ENCODE measurements at regions of chr11 and their contacts with region 1.

Region 1: DNA sequence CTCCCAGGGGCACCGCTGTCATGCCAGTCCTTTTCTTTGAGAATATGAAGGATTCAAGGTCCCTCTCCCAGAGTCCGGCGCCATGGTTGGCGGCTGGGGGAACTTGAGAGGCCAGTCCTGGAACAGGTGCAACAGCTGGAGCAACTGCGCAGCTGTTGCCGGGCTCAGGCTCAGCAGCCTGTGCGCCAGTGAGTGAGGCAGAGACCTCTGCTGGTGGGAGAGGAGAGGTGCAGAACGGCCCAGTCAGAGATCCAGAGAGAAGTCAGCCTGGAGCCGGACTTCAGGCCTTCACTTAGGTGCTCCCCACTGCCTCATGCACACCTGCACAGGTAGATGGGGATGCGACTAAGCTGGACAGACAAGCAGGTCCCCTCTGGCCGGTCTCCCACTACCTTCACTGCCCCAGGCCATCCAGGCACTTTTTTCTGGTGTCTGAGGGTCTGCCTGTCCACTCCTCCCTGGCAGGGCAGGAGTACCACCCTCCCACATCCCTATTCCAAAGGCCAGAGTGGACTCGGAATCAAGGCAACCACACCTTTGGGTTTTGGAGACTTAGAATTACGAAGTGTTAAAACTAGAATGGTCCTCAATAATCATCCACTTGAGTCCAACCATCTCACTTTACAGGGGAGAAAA is 4.6 kb downstream of the CHRDL2 start:
- DNase-seq: peak; percentile 79
- ATAC-seq: peak; percentile 90
- H3K4me3 Mint-ChIP-seq: no peak overlapping the region
- H3K27ac Mint-ChIP-seq: no peak overlapping the region
- H3K4me1 Mint-ChIP-seq: peaks cover 6% of the 10 kb centered on the region; the same call in 1 of the 2 replicates
- H3K27me3 Mint-ChIP-seq: peaks cover 78% of the 10 kb centered on the region
- CTCF ChIP-seq: peak; percentile 72

Region 2: GRCh38 chr11:74672956-74673692 is 53.5 kb before region 1 on chr11:
- CTCF ChIA-PET with region 1: no interaction called
- POLR2A ChIA-PET with region 1: no interaction called
- DNase-seq: no peak
- ATAC-seq: no peak
- H3K4me3 Mint-ChIP-seq: no peak overlapping the region
- H3K27ac Mint-ChIP-seq: no peak overlapping the region
- H3K4me1 Mint-ChIP-seq: no peaks in the 10 kb centered on the region
- H3K27me3 Mint-ChIP-seq: no peaks in the 10 kb centered on the region; the same call in 1 of the 2 replicates
- CTCF ChIP-seq: no peak

Region 3: DNA sequence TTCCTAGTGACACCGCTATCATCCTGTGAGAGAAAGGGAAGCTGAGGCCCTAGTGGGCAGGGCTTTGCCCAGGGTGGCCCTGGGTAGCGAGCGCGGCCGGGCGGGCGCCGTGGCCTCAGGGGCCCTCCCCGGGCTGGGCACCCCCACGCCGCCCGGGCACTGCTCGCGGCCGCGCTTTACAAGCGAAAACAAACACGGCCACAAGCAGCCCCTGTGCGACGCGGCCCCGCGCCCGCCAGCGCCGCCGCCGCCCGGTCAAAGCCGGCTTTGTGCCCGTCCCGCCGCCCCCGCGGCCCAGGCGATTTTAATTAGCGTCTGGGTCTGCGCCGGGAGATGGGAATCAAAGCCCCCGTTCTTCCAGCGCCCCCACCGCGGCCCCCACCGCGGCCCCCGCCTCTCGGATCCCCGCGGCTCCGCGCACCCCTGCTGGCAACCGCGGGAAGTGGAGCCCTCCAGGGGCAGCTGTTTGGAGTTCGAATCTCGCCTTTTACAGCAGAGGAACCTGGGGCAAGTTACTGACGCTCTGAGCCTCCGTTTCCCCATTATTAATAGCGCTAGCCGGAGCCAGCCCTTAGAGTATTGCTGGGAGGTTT is 43.3 kb before region 1 on chr11:
- CTCF ChIA-PET with region 1: interaction called, 11 read pairs
- POLR2A ChIA-PET with region 1: no interaction called
- DNase-seq: peak; percentile 68
- ATAC-seq: peak; percentile 68
- H3K4me3 Mint-ChIP-seq: peak overlapping the region; percentile 66
- H3K27ac Mint-ChIP-seq: no peak overlapping the region
- H3K4me1 Mint-ChIP-seq: peaks cover 7% of the 10 kb centered on the region
- H3K27me3 Mint-ChIP-seq: peaks cover 21% of the 10 kb centered on the region
- CTCF ChIP-seq: no peak

Region 4: GRCh38 chr11:74696932-74697687 is 29.6 kb before region 1 on chr11:
- CTCF ChIA-PET with region 1: interaction called, 263 read pairs
- POLR2A ChIA-PET with region 1: interaction called, 3 read pairs
- DNase-seq: peak; percentile 45
- ATAC-seq: peak; percentile 61
- H3K4me3 Mint-ChIP-seq: peak overlapping the region; percentile 59
- H3K27ac Mint-ChIP-seq: no peak overlapping the region
- H3K4me1 Mint-ChIP-seq: peaks cover 17% of the 10 kb centered on the region
- H3K27me3 Mint-ChIP-seq: no peaks in the 10 kb centered on the region; the same call in 1 of the 2 replicates
- CTCF ChIP-seq: no peak

Region 5: GRCh38 chr11:74710281-74710938 is 16.3 kb before region 1 on chr11:
- CTCF ChIA-PET with region 1: interaction called, 17 read pairs
- POLR2A ChIA-PET with region 1: interaction called, 3 read pairs
- DNase-seq: no peak
- ATAC-seq: peak; percentile 58
- H3K4me3 Mint-ChIP-seq: no peak overlapping the region
- H3K27ac Mint-ChIP-seq: peak overlapping the region; percentile 26; the same call in 1 of the 2 replicates
- H3K4me1 Mint-ChIP-seq: peaks cover 11% of the 10 kb centered on the region
- H3K27me3 Mint-ChIP-seq: no peaks in the 10 kb centered on the region
- CTCF ChIP-seq: no peak

Region 6: DNA sequence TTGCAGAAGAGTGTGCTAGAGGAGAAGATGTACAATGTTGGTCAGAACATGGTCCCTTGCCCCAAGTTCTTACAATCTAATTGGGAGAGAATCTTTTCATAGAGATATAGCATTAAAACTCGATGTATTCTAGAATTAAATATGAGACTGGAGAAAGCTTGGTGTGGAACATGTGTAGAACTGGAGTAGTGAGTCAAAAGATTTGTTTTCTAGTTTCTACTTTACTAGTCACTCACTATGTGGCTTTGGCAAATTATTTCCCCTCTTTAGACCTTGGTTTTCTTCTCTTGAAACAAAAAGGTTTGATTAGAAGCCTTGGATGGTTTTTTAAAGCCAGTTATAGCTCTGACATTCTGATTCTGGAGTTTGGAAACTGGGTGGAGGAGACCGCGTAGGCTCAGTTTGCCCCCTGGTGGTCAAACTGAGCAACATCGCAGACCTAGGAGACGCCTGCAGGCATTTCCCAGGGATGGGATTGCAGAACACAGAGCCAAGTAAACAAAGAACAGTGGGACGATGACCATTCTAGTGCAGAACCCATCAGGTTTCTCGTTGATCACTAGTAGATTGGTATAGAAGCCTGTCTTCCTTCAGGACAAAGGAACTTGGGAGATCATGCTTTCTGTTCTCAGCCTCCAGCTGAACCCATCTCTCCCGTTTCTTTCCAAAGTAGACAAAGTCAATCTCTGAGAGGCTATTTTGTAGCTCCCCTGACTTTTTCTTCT is 13.0 kb after region 1 on chr11:
- CTCF ChIA-PET with region 1: interaction called, 29 read pairs
- POLR2A ChIA-PET with region 1: no interaction called
- DNase-seq: peak; percentile 62
- ATAC-seq: peak; percentile 98
- H3K4me3 Mint-ChIP-seq: no peak overlapping the region
- H3K27ac Mint-ChIP-seq: no peak overlapping the region
- H3K4me1 Mint-ChIP-seq: 0 out of 2 replicates have a peak, but pooled peaks cover 2% of the 10 kb centered on the region
- H3K27me3 Mint-ChIP-seq: peaks cover 13% of the 10 kb centered on the region
- CTCF ChIP-seq: peak; percentile 91

Measured in WTC11 (cell line).